ENCODE measurements at regions of chr17 and their contacts with region 1.

Region 1: GRCh38 chr17:58577642-58578091 is 63.2 kb upstream of the MTMR4 start:
- DNase-seq: no peak
- H3K4me3 ChIP-seq: no peak overlapping the region
- H3K27ac ChIP-seq: no peak overlapping the region
- H3K27me3 ChIP-seq: peaks cover 3% of the 10 kb centered on the region
- CTCF ChIP-seq: peak; percentile 70

Region 2: DNA sequence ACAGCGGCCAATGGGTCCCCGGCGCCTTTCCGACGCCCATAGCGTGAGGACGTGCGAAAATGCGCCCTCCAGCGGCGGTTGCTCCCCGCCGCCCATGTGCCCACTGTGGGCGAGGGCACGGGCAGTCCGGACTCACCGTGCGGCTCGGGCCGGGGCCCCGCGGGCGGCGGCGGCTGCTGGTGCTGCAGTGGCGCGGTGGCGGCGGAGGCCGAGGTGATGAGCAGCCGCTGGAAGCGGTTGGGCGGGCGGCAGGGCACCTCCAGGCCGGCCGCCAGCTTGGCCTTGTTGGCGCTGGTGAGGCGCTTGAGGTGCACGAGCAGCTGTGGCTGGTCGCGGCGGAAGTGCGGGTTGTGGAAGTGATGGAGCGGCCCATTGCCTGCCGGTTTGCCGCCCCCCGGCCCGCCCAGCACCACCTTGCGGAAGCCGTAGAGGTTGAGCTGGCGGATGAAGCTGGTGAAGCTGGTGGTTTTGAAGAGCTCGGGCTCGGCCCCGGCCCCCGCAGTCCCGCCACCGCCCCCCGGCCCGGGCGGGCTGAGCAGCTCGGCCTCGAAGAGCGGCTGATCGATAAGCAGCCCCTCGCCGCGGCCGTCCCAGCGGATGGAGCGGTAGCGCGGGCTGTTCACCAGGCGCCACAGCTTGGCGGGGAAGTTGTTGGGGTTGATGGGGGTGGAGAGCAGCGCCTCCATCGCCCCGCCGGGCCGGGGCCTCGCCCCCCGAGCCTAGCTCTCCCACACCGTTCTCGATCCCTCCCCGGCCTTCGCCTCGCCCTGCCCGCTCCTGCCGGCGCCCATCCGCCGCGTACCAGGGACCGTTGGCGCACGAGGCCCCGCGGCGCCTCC is 89.9 kb before region 1 on chr17 and contains the start of gene HSF5:
- CTCF ChIA-PET with region 1: no interaction called
- POLR2A ChIA-PET with region 1: no interaction called
- DNase-seq: no peak
- H3K4me3 ChIP-seq: no peak within 1 kb of the TSS
- H3K27ac ChIP-seq: no peak within 1 kb of the TSS
- H3K27me3 ChIP-seq: no peaks in the 10 kb centered on the region
- CTCF ChIP-seq: no peak
- polyA plus RNA-seq, gene HSF5: not detected in 2 replicates

Region 3: DNA sequence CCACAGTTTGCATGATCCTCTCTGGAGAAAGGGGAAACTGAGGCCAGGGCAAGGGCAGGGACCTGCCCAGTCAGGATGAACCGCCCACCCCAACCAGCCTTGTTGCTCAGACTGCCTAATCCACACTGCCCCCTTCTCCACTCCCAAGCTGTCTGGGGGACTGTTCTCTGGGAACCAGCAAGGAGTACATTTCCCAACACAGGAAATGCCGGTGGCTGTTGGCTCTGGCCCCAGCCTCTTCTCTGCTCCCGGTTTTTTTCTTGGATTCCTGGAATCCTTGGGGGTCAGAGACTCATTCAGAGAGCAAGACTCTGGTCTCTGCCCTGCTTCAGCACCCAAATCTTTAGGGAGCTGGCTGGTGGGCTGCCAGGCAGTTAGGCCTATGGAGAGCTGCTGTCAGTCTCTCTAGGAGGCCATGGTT is 52.5 kb before region 1 on chr17:
- CTCF ChIA-PET with region 1: interaction called, 10 read pairs
- POLR2A ChIA-PET with region 1: no interaction called
- DNase-seq: peak; percentile 55
- H3K4me3 ChIP-seq: no peak overlapping the region
- H3K27ac ChIP-seq: peak overlapping the region; percentile 70
- H3K27me3 ChIP-seq: peaks cover 2% of the 10 kb centered on the region
- CTCF ChIP-seq: no peak

Region 4: GRCh38 chr17:58587702-58588254 is 10.1 kb after region 1 on chr17:
- CTCF ChIA-PET with region 1: interaction called, 28 read pairs
- POLR2A ChIA-PET with region 1: no interaction called
- DNase-seq: no peak
- H3K4me3 ChIP-seq: no peak overlapping the region
- H3K27ac ChIP-seq: no peak overlapping the region
- H3K27me3 ChIP-seq: no peaks in the 10 kb centered on the region
- CTCF ChIP-seq: peak; percentile 98

Measured in AG04450 (cell line).